PC-9 (cell line): ENCODE measurements at regions of chr17 and their contacts with region 1.

Region 1: GRCh38 chr17:64095144-64095882 is 34.6 kb downstream of the ERN1 start:
- DNase-seq: peak in 1 of 2 experiments; percentile 87
- H3K4me3 ChIP-seq: no peak overlapping the region
- H3K27ac ChIP-seq: peak overlapping the region; percentile 64
- H3K4me1 ChIP-seq: peaks cover 39% of the 10 kb centered on the region
- H3K27me3 ChIP-seq: no peaks in the 10 kb centered on the region
- CTCF ChIP-seq: no peak

Region 2: GRCh38 chr17:63881876-63882601 is 213.3 kb before region 1 on chr17 and contains the start of gene GH2:
- CTCF ChIA-PET with region 1: interaction called, 14 read pairs
- POLR2A ChIA-PET with region 1: no interaction called
- intact Hi-C with region 1: no loop called
- DNase-seq: peak; percentile 40 to 58
- H3K4me3 ChIP-seq: no peak within 1 kb of the TSS
- H3K27ac ChIP-seq: no peak within 1 kb of the TSS
- H3K4me1 ChIP-seq: no peaks in the 10 kb centered on the region
- H3K27me3 ChIP-seq: peaks cover 5% of the 10 kb centered on the region; the same call in 1 of the 2 replicates
- CTCF ChIP-seq: peak; percentile 77
- total RNA-seq, gene GH2: not detected in 2 replicates